ENCODE measurements at regions of chr11 and their contacts with region 1.

Region 1: GRCh38 chr11:64358907-64359711 is at the start of gene RPS6KA4:
- DNase-seq: peak; percentile 60
- H3K4me3 Mint-ChIP-seq: peak within 1 kb of the TSS; percentile 91
- H3K27ac Mint-ChIP-seq: peak within 1 kb of the TSS; percentile 34
- H3K4me1 Mint-ChIP-seq: peaks cover 41% of the 10 kb centered on the region
- H3K27me3 Mint-ChIP-seq: no peaks in the 10 kb centered on the region
- total RNA-seq, gene RPS6KA4: 19.1 to 21.3 TPM

Region 2: DNA sequence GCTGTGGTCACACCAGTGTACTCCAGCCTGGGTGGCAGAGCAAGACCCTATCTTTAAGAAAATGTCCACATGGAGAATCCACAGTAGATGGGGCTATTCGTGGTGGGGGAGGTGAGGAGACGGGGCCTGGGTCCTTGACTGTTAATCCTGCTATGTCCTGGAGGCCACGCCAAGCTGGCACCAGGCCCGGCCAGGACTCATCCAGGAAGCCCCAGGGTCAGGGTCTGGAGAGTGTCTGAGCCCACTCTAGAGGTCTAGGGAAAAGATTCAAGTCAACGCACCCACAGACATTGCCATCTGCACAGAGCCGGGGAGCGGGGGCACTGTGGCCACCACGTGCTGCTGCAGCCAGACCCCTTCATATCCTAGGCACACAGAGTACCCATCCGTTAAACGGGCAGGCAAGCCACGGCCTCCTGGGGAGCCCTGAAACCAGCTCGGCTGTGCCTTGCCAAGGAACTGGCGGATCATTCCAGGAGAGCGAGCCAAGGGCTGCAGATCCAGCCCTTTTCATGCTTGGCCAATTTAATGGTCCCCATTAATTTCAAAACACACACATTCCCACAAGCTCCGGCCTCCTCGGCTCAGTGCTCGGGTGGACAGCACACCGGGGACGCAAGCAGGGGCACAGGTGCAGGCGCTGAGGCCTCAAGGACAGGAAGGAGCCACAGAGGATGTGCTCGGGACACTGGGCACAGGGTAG is 217.9 kb before region 1 on chr11:
- CTCF ChIA-PET with region 1: no interaction called
- intact Hi-C with region 1: no loop called
- DNase-seq: no peak
- H3K4me3 Mint-ChIP-seq: no peak overlapping the region
- H3K27ac Mint-ChIP-seq: no peak overlapping the region
- H3K4me1 Mint-ChIP-seq: peaks cover 9% of the 10 kb centered on the region
- H3K27me3 Mint-ChIP-seq: no peaks in the 10 kb centered on the region

Region 3: GRCh38 chr11:64331557-64332371 is 27.3 kb before region 1 on chr11:
- CTCF ChIA-PET with region 1: interaction called, 10 read pairs
- intact Hi-C with region 1: no loop called
- DNase-seq: peak; percentile 82
- H3K4me3 Mint-ChIP-seq: no peak overlapping the region
- H3K27ac Mint-ChIP-seq: no peak overlapping the region
- H3K4me1 Mint-ChIP-seq: peaks cover 10% of the 10 kb centered on the region
- H3K27me3 Mint-ChIP-seq: no peaks in the 10 kb centered on the region

Region 4: GRCh38 chr11:64341851-64342791 is 17.0 kb before region 1 on chr11:
- CTCF ChIA-PET with region 1: interaction called, 61 read pairs
- intact Hi-C with region 1: loop called (anchors 1 kb)
- DNase-seq: peak; percentile 95
- H3K4me3 Mint-ChIP-seq: peak overlapping the region; percentile 18
- H3K27ac Mint-ChIP-seq: no peak overlapping the region
- H3K4me1 Mint-ChIP-seq: peaks cover 34% of the 10 kb centered on the region
- H3K27me3 Mint-ChIP-seq: no peaks in the 10 kb centered on the region

Region 5: DNA sequence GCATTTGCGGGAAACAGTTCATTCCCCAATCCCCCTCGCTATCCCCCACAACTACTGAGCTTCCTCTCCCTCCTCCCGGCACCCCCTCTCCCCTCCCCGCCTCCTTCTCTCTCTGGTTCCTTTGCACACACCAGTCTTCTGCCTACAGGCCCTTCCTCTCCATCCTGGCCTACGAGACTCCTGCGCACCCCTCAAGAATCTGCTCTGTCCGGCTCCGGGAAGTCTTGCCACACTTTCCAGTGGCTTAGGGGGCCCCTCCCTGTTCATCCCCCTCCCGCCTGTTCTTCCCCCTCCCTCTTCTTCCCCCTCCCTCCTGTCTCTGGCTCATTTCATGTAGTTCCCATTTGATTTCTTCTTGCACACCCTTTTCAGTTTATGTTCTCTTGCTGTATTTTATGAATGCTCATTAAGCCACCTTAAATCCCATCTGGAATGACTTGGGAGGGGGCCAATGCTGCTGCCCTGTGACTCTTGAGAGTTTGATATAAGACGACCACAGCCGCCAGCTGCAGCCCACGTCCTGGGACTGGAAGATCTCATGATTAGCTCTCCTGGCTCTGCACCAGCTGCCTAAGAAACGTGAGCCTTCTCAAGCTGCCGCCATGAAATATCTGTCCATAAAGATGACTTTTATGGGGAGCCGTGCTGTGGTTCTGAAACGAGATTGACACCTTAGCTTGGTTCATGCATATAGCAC is 50.7 kb after region 1 on chr11:
- CTCF ChIA-PET with region 1: no interaction called
- intact Hi-C with region 1: no loop called
- DNase-seq: no peak
- H3K4me3 Mint-ChIP-seq: no peak overlapping the region
- H3K27ac Mint-ChIP-seq: no peak overlapping the region
- H3K4me1 Mint-ChIP-seq: no peaks in the 10 kb centered on the region
- H3K27me3 Mint-ChIP-seq: no peaks in the 10 kb centered on the region

Region 6: DNA sequence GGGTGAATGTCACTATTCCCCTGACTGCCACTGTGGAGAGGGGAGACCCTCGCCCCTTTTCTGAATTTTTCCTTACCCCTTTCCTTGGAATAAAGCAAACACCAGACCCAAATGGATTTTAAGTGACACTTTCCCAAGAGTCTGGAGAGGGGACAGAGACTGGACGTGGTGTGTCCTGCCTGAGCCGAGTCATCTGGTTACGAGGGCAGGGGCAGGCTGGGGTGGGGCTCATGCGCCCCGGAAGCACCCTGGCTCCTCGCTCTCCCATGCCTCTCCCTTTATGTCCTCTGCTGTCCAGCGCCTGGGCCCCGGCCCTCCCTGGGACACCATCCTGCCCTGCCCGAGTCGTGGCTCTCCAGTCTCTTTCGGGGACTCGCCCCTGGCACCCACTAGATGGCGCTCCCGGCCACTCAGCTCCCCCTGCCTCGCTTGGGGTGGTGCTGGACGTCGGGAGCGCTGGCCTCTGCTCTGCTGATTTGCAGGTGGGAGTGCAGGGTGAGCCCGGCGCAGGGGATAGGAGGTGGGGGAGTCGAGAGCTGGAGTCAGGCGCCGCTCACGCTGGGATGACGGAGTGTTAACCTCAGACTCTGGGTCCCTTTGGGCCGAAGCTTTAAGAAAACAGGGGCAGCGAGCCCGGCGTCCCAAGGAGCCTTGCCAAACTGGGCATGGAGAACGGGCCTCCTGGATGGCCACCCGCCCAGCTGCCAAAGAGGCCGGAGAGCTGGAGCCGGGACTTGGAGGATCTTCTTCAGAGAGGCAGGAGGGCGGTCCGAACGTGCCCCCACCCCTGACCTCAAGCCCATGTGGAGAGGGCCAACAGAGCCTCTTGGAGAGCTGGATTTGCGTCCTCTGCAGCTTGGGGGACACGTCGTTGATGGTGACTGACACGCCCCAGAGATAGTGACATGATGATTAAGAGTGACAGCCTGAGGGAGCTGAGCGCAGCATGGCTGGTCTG is 89.8 kb after region 1 on chr11:
- CTCF ChIA-PET with region 1: interaction called, 7 read pairs
- intact Hi-C with region 1: loop called (anchors 2 kb)
- DNase-seq: peak; percentile 84
- H3K4me3 Mint-ChIP-seq: peak overlapping the region; percentile 65
- H3K27ac Mint-ChIP-seq: no peak overlapping the region
- H3K4me1 Mint-ChIP-seq: peaks cover 17% of the 10 kb centered on the region
- H3K27me3 Mint-ChIP-seq: peaks cover 12% of the 10 kb centered on the region

Region 7: GRCh38 chr11:64652586-64653387 is 293.7 kb after region 1 on chr11:
- CTCF ChIA-PET with region 1: no interaction called
- intact Hi-C with region 1: loop called (anchors 5 kb)
- DNase-seq: peak; percentile 88
- H3K4me3 Mint-ChIP-seq: no peak overlapping the region
- H3K27ac Mint-ChIP-seq: no peak overlapping the region
- H3K4me1 Mint-ChIP-seq: no peaks in the 10 kb centered on the region
- H3K27me3 Mint-ChIP-seq: no peaks in the 10 kb centered on the region

Region 8: DNA sequence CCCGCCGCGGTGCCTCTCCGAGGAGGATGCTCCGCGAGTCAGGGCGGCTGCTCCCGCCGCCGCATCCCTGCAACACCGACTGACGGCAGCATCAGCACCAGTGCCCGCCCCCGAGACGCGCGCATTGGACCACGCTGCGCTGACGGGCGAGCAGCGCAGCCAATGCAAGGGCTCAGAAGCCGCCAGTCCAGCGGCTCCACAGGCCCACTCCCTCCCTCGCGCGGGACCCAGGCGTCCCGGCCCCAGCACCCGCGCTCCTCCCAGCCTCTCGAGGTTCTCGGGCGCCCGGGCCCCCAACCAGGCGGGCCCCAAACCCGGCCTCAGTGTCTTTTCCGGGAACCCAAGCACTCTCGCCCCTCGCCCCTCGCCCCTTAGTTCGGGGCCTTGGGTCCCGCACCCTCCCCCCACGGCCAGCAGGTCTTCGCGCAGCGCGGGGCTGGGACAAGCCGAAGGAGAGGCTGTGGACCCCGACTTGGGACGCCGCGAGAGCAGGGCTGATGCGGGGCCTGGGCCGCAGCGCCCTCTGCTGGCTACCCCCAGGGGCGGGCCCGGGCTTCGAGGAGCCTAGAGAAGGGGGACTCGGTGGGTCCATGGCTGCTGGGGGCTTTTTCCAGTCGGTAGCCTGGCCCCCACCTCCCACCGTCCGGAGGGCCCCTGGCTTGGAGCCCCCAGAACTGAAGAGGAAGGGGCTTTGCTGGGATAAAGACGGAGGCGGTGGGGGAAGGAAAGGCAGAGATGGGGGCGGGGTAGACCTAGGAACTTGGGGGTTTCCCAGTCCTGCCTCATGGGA is 364.2 kb after region 1 on chr11 and contains the start of gene NRXN2:
- CTCF ChIA-PET with region 1: no interaction called
- intact Hi-C with region 1: loop called (anchors 5 kb)
- DNase-seq: peak; percentile 91
- H3K4me3 Mint-ChIP-seq: peak within 1 kb of the TSS; percentile 67
- H3K27ac Mint-ChIP-seq: no peak within 1 kb of the TSS
- H3K4me1 Mint-ChIP-seq: peaks cover 7% of the 10 kb centered on the region
- H3K27me3 Mint-ChIP-seq: peaks cover 22% of the 10 kb centered on the region
- total RNA-seq, gene NRXN2: 0.24 to 0.35 TPM